CD8-positive, alpha-beta T cell (primary cell): ENCODE measurements at regions of chr1 and their contacts with region 1.

Region 1: GRCh38 chr1:226626577-226626956 is 78.0 kb downstream of the STUM start:
- DNase-seq: peak; percentile 53 to 86 (median 78)
- ATAC-seq: peak; percentile 97
- H3K4me3 ChIP-seq: peak overlapping the region; percentile 14 to 31
- H3K4me3 Mint-ChIP-seq: peak overlapping the region; percentile 63
- H3K27ac ChIP-seq: no peak overlapping the region
- H3K27ac Mint-ChIP-seq: no peak overlapping the region
- H3K4me1 ChIP-seq: peaks cover 12% of the 10 kb centered on the region
- H3K4me1 Mint-ChIP-seq: peaks cover 22% of the 10 kb centered on the region
- H3K27me3 ChIP-seq: no peaks in the 10 kb centered on the region
- H3K27me3 Mint-ChIP-seq: no peaks in the 10 kb centered on the region
- CTCF ChIP-seq: peak; percentile 98

Region 2: GRCh38 chr1:226608699-226609505 is 17.7 kb before region 1 on chr1:
- CTCF ChIA-PET with region 1: interaction called, 11 read pairs
- POLR2A ChIA-PET with region 1: no interaction called
- intact Hi-C with region 1: no loop called
- DNase-seq: peak; percentile 33 to 81 (median 70)
- ATAC-seq: peak; percentile 77
- H3K4me3 ChIP-seq: no peak overlapping the region
- H3K4me3 Mint-ChIP-seq: no peak overlapping the region
- H3K27ac ChIP-seq: no peak overlapping the region
- H3K27ac Mint-ChIP-seq: no peak overlapping the region
- H3K4me1 ChIP-seq: no peaks in the 10 kb centered on the region
- H3K4me1 Mint-ChIP-seq: no peaks in the 10 kb centered on the region
- H3K27me3 ChIP-seq: peaks cover 0 to 4% of the 10 kb centered on the region in 2 experiments
- H3K27me3 Mint-ChIP-seq: peaks cover 3% of the 10 kb centered on the region
- CTCF ChIP-seq: peak; percentile 77

Region 3: GRCh38 chr1:226687426-226687825 is 60.9 kb after region 1 on chr1:
- CTCF ChIA-PET with region 1: interaction called, 21 read pairs
- POLR2A ChIA-PET with region 1: interaction called, 4 read pairs
- intact Hi-C with region 1: no loop called
- DNase-seq: peak in 6 of 9 experiments; percentile 35 to 81 (median 68)
- ATAC-seq: peak; percentile 22
- H3K4me3 ChIP-seq: no peak overlapping the region
- H3K4me3 Mint-ChIP-seq: peak overlapping the region; percentile 30
- H3K27ac ChIP-seq: peak overlapping the region; percentile 16 to 60
- H3K27ac Mint-ChIP-seq: peak overlapping the region; percentile 99
- H3K4me1 ChIP-seq: peaks cover 100% of the 10 kb centered on the region
- H3K4me1 Mint-ChIP-seq: peaks cover 99% of the 10 kb centered on the region
- H3K27me3 ChIP-seq: no peaks in the 10 kb centered on the region
- H3K27me3 Mint-ChIP-seq: no peaks in the 10 kb centered on the region
- CTCF ChIP-seq: peak; percentile 65

Region 4: GRCh38 chr1:226940029-226940805 is 313.6 kb after region 1 on chr1 and contains the start of gene COQ8A:
- CTCF ChIA-PET with region 1: no interaction called
- POLR2A ChIA-PET with region 1: no interaction called
- intact Hi-C with region 1: loop called in 1 of 2 experiments (anchors 10 kb)
- DNase-seq: peak; percentile 97 to 100 (median 99)
- ATAC-seq: peak; percentile 90
- H3K4me3 ChIP-seq: peak within 1 kb of the TSS; percentile 92 to 93
- H3K4me3 Mint-ChIP-seq: peak within 1 kb of the TSS; percentile 88
- H3K27ac ChIP-seq: peak within 1 kb of the TSS; percentile 93 to 97
- H3K27ac Mint-ChIP-seq: peak within 1 kb of the TSS; percentile 97
- H3K4me1 ChIP-seq: peaks cover 38% of the 10 kb centered on the region
- H3K4me1 Mint-ChIP-seq: peaks cover 49% of the 10 kb centered on the region
- H3K27me3 ChIP-seq: no peaks in the 10 kb centered on the region
- H3K27me3 Mint-ChIP-seq: no peaks in the 10 kb centered on the region
- CTCF ChIP-seq: no peak
- total RNA-seq, gene COQ8A: 82.6 to 90.0 TPM

Region 5: GRCh38 chr1:227542143-227543120 is 915.9 kb after region 1 on chr1:
- CTCF ChIA-PET with region 1: no interaction called
- POLR2A ChIA-PET with region 1: no interaction called
- intact Hi-C with region 1: loop called in 1 of 2 experiments (anchors 5 kb)
- DNase-seq: peak; percentile 74 to 94 (median 90)
- ATAC-seq: peak; percentile 98
- H3K4me3 ChIP-seq: peak overlapping the region; percentile 43 to 61
- H3K4me3 Mint-ChIP-seq: peak overlapping the region; percentile 64
- H3K27ac ChIP-seq: peak overlapping the region in 1 of 2 experiments; percentile 57
- H3K27ac Mint-ChIP-seq: no peak overlapping the region
- H3K4me1 ChIP-seq: peaks cover 11% of the 10 kb centered on the region
- H3K4me1 Mint-ChIP-seq: peaks cover 5% of the 10 kb centered on the region
- H3K27me3 ChIP-seq: no peaks in the 10 kb centered on the region
- H3K27me3 Mint-ChIP-seq: no peaks in the 10 kb centered on the region
- CTCF ChIP-seq: peak; percentile 93

Region 6: DNA sequence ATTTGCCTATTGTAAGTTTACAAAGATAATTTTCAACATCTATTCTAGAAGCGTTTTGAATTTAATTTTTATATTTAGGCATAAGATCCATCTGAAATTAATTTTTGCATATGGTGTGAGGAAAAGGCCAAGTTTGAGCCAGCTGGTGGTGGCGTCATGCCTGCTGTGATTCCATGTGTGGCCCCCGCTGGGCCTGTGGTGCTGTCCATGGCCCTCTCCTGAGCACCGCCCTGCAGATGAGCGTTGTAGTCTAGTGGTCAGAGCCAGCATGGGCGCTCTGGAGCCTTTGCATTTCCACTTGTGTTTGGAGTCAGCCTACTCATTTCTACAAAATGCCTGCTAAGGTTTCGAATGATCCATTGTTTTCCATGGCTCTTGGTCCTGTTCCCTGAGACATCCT is 1211.6 kb after region 1 on chr1:
- CTCF ChIA-PET with region 1: no interaction called
- POLR2A ChIA-PET with region 1: no interaction called
- intact Hi-C with region 1: no loop called
- DNase-seq: no peak
- ATAC-seq: no peak
- H3K4me3 ChIP-seq: no peak overlapping the region
- H3K4me3 Mint-ChIP-seq: no peak overlapping the region
- H3K27ac ChIP-seq: no peak overlapping the region
- H3K27ac Mint-ChIP-seq: no peak overlapping the region
- H3K4me1 ChIP-seq: no peaks in the 10 kb centered on the region
- H3K4me1 Mint-ChIP-seq: no peaks in the 10 kb centered on the region
- H3K27me3 ChIP-seq: no peaks in the 10 kb centered on the region
- H3K27me3 Mint-ChIP-seq: no peaks in the 10 kb centered on the region
- CTCF ChIP-seq: no peak